CD4-positive, alpha-beta memory T cell (primary cell): ENCODE measurements at regions of chr6 and their contacts with region 1.

Region 1: GRCh38 chr6:3977875-3978711 is 100.8 kb downstream of the FAM217A start:
- DNase-seq: peak; percentile 50 to 66 (median 56)
- H3K4me3 ChIP-seq: no peak overlapping the region
- H3K4me3 Mint-ChIP-seq: peak overlapping the region in 6 of 8 donors; percentile 49 to 76 (median 63)
- H3K27ac ChIP-seq: no peak overlapping the region
- H3K27ac Mint-ChIP-seq: peak overlapping the region in 2 of 7 donors; percentile 52 to 73
- H3K4me1 ChIP-seq: peaks cover 4% of the 10 kb centered on the region
- H3K4me1 Mint-ChIP-seq: peaks cover 7 to 12% (median 8%) of the 10 kb centered on the region in 4 donors
- H3K27me3 ChIP-seq: no peaks in the 10 kb centered on the region
- H3K27me3 Mint-ChIP-seq: peaks cover 0 to 3% of the 10 kb centered on the region in 2 donors

Region 2: DNA sequence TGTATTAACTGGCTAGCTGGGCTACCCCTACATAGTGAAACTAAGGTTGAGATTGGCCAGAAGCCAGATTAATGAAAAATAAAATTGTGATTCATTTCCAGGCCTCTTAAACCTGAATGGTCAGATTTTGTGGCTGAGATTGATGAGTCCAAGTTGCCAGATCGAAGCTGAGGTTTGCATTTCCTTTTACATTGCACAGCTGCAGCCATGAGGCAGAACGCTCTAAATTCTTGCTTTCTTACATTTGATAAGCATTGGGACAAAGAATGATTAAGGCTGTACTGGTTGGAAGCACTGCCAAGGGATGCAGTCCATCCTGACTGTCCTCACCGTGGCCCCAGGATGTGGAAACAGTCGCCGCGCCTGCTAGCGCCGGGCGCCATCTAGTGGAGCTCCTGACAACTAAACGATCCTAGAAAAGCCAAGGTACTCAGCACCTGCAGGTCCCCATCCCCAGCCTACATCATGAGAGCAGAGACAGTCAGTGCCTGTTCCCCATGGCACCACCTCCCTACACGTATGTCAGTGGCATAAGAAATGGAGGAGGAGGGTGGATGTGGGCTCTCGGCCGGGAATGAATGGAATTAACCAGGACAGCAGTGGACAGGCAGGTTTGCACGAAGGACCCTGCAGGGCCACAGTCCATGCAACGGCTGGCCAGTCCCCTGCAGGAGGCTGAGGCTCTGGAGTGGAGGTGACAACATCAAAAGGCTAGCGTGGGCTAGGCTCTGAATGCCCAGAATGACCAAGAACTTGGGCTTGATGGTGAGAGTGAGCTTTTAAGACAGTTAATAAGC is 245.6 kb before region 1 on chr6:
- CTCF ChIA-PET with region 1: interaction called, 25 read pairs
- POLR2A ChIA-PET with region 1: no interaction called
- intact Hi-C with region 1: no loop called
- DNase-seq: peak; percentile 50 to 63 (median 58)
- H3K4me3 ChIP-seq: no peak overlapping the region
- H3K4me3 Mint-ChIP-seq: peak overlapping the region in 1 of 8 donors; percentile 22
- H3K27ac ChIP-seq: no peak overlapping the region
- H3K27ac Mint-ChIP-seq: peak overlapping the region in 1 of 7 donors; percentile 55
- H3K4me1 ChIP-seq: peaks cover 3% of the 10 kb centered on the region
- H3K4me1 Mint-ChIP-seq: peaks cover 0 to 4% (median 2%) of the 10 kb centered on the region in 4 donors
- H3K27me3 ChIP-seq: no peaks in the 10 kb centered on the region
- H3K27me3 Mint-ChIP-seq: peaks cover 3 to 5% of the 10 kb centered on the region in 2 donors

Region 3: DNA sequence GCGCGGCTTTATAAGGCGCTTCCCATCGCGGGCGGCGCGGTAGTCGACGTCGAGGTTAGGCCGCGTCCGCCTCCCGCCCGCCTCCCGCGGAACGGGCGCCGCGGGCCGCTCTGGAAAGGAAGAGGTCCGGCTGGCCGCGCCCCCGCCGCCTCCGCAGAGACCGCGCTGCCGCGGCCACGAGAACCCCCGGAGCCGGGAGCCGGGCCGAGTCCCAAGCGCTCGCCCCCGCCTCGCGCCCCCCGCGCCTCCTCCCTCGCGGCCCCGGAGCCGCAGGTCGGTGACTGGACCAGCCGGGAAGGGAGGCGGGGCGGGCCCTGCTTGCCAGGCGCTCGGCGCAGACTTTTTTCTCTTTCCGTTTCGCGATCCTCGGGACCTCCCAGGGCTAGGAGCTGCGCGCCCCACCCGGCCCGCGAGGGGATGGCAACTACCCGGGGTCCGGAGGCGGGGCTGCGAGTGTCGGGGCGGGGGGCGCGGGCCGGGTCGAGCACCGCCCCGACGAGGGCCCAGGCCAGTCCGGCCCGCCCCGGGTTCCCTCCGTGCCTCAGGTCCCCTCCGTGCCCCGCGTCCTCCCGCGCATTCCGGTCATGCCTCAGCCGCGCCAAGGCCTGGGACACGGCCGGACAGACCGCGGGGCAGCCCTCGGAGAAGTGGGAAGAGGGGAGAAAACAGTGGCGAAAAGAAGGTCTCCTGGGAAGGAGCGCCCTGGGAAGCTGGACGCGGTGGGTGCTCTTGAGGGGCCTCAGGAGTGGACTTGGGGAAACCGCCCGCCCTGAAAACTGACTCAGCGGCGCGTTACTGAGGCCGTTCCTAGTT is 226.2 kb before region 1 on chr6:
- CTCF ChIA-PET with region 1: interaction called, 111 read pairs
- POLR2A ChIA-PET with region 1: no interaction called
- intact Hi-C with region 1: no loop called
- DNase-seq: peak; percentile 46 to 78 (median 51)
- H3K4me3 ChIP-seq: peak overlapping the region in 1 of 2 donors; percentile 38
- H3K4me3 Mint-ChIP-seq: peak overlapping the region in 7 of 8 donors; percentile 21 to 73 (median 57)
- H3K27ac ChIP-seq: no peak overlapping the region
- H3K27ac Mint-ChIP-seq: no peak overlapping the region
- H3K4me1 ChIP-seq: peaks cover 11% of the 10 kb centered on the region
- H3K4me1 Mint-ChIP-seq: peaks cover 0 to 27% (median 3%) of the 10 kb centered on the region in 4 donors
- H3K27me3 ChIP-seq: no peaks in the 10 kb centered on the region
- H3K27me3 Mint-ChIP-seq: peaks cover 20 to 23% of the 10 kb centered on the region in 2 donors

Region 4: GRCh38 chr6:3957321-3957720 is 20.8 kb before region 1 on chr6:
- CTCF ChIA-PET with region 1: interaction called, 10 read pairs
- POLR2A ChIA-PET with region 1: no interaction called
- intact Hi-C with region 1: no loop called
- DNase-seq: no peak
- H3K4me3 ChIP-seq: no peak overlapping the region
- H3K4me3 Mint-ChIP-seq: no peak overlapping the region
- H3K27ac ChIP-seq: no peak overlapping the region
- H3K27ac Mint-ChIP-seq: no peak overlapping the region
- H3K4me1 ChIP-seq: no peaks in the 10 kb centered on the region
- H3K4me1 Mint-ChIP-seq: no peaks in the 10 kb centered on the region
- H3K27me3 ChIP-seq: no peaks in the 10 kb centered on the region
- H3K27me3 Mint-ChIP-seq: peaks cover 12 to 16% of the 10 kb centered on the region in 2 donors

Region 5: DNA sequence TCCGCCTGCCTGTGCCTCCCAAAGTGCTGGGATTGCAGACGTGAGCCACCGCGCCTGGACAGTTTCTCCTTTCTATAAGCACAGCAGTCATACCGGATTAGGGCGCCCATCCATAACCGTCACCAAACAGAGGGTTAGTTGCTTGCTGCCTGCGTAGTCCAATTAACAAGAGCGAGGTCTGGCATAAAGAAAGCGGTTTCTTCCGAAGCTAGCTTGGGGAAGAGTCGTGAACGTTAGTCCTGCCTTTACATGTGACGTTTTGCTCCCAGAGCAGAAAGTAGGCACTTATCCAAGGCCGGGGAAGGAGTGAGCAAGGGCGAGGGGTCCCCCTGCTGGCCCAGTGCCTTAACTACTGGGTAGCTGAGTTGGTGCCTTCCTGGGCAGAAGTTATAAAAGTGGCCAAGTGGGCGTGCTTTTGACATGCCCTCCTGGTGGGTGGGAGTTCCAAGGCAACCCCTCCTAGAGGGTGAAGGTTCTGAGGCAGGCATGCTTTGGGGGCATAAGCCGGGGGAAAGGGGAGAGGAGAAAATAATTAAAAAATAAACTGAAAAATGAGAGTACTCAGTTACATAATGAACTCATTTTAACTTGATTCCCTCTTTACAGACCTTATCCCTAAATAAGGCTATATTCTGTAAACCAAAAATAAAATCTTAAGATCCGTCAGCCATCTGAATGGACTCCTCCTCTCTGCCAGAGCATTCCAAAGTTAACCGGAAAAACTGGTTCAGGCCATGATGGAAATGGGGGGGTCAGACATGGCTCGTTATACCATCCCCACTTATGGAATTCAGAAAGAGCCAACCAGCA is 12.8 kb after region 1 on chr6:
- CTCF ChIA-PET with region 1: interaction called, 50 read pairs
- POLR2A ChIA-PET with region 1: interaction called, 4 read pairs
- intact Hi-C with region 1: no loop called
- DNase-seq: peak; percentile 52 to 68 (median 58)
- H3K4me3 ChIP-seq: no peak overlapping the region
- H3K4me3 Mint-ChIP-seq: no peak overlapping the region
- H3K27ac ChIP-seq: no peak overlapping the region
- H3K27ac Mint-ChIP-seq: peak overlapping the region in 4 of 7 donors; percentile 33 to 91 (median 56)
- H3K4me1 ChIP-seq: peaks cover 8% of the 10 kb centered on the region
- H3K4me1 Mint-ChIP-seq: peaks cover 9 to 23% (median 14%) of the 10 kb centered on the region in 4 donors
- H3K27me3 ChIP-seq: no peaks in the 10 kb centered on the region
- H3K27me3 Mint-ChIP-seq: no peaks in the 10 kb centered on the region

Region 6: GRCh38 chr6:4008324-4009047 is 30.4 kb after region 1 on chr6:
- CTCF ChIA-PET with region 1: interaction called, 22 read pairs
- POLR2A ChIA-PET with region 1: no interaction called
- intact Hi-C with region 1: loop called (anchors 1 kb)
- DNase-seq: peak in 4 of 5 donors; percentile 57 to 62 (median 58)
- H3K4me3 ChIP-seq: no peak overlapping the region
- H3K4me3 Mint-ChIP-seq: no peak overlapping the region
- H3K27ac ChIP-seq: no peak overlapping the region
- H3K27ac Mint-ChIP-seq: peak overlapping the region in 5 of 7 donors; percentile 18 to 87 (median 37)
- H3K4me1 ChIP-seq: peaks cover 47% of the 10 kb centered on the region
- H3K4me1 Mint-ChIP-seq: peaks cover 46 to 62% (median 54%) of the 10 kb centered on the region in 4 donors
- H3K27me3 ChIP-seq: no peaks in the 10 kb centered on the region
- H3K27me3 Mint-ChIP-seq: no peaks in the 10 kb centered on the region

Region 7: GRCh38 chr6:4533576-4533975 is 555.5 kb after region 1 on chr6:
- CTCF ChIA-PET with region 1: no interaction called
- POLR2A ChIA-PET with region 1: no interaction called
- intact Hi-C with region 1: no loop called
- DNase-seq: no peak
- H3K4me3 ChIP-seq: no peak overlapping the region
- H3K4me3 Mint-ChIP-seq: no peak overlapping the region
- H3K27ac ChIP-seq: no peak overlapping the region
- H3K27ac Mint-ChIP-seq: no peak overlapping the region
- H3K4me1 ChIP-seq: no peaks in the 10 kb centered on the region
- H3K4me1 Mint-ChIP-seq: no peaks in the 10 kb centered on the region
- H3K27me3 ChIP-seq: peaks cover 4% of the 10 kb centered on the region
- H3K27me3 Mint-ChIP-seq: peaks cover 5 to 8% of the 10 kb centered on the region in 2 donors

Region 8: DNA sequence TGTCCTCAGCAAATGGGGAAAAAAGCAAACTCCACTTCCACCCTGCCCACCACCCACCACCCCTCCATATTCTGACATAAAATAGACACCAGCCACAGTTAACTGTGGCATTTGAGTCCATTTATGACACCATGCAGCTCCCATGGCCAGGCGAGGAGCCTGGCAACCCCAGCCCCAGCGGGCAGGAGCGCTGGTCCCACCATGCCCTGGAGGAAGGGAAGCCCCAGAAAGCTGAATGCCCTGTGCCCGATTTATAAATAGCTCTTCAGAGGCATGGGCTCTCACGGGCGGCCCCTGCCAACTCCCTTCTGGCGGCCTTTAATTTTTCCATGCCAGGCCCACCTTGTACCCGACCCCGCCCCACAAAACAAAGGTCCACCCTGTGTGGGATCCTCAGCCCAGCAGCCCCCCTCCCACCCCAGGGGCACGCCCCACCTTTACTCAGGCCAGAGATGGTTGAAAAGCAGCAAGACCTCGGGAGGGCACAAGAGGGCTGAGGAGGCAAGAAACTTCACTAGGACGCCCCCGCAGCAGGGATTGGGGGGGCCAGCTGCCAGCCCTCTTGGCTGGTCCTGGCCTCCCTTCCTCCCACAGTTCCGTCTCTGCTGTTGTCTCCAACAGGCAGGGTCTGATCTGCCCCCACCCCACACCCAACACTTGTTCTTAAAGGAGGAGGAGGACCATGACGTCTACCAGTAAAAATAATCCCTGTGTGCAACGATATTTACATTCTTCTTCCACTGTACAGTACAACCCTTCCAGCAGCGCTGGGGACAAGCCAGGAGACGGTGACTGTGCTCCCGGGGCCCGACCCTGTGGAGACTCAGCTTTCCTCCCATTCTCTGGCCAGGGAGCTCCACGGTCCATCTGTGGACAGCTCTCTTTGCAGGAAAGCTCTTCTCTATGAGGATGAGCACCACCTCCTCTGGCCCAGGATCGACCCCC is 682.6 kb after region 1 on chr6:
- CTCF ChIA-PET with region 1: no interaction called
- POLR2A ChIA-PET with region 1: no interaction called
- intact Hi-C with region 1: no loop called
- DNase-seq: no peak
- H3K4me3 ChIP-seq: no peak overlapping the region
- H3K4me3 Mint-ChIP-seq: no peak overlapping the region
- H3K27ac ChIP-seq: no peak overlapping the region
- H3K27ac Mint-ChIP-seq: no peak overlapping the region
- H3K4me1 ChIP-seq: no peaks in the 10 kb centered on the region
- H3K4me1 Mint-ChIP-seq: no peaks in the 10 kb centered on the region
- H3K27me3 ChIP-seq: no peaks in the 10 kb centered on the region
- H3K27me3 Mint-ChIP-seq: peaks cover 7% of the 10 kb centered on the region in 2 donors